Right ventricle myocardium inferior (tissue), 1 donor: ENCODE measurements at regions of chr6 and their contacts with region 1.

Region 1: GRCh38 chr6:32589598-32590449 is at the start of gene HLA-DRB1:
- DNase-seq: no peak
- ATAC-seq: peak; percentile 90
- total RNA-seq, gene HLA-DRB1: 32.4 TPM

Region 2: DNA sequence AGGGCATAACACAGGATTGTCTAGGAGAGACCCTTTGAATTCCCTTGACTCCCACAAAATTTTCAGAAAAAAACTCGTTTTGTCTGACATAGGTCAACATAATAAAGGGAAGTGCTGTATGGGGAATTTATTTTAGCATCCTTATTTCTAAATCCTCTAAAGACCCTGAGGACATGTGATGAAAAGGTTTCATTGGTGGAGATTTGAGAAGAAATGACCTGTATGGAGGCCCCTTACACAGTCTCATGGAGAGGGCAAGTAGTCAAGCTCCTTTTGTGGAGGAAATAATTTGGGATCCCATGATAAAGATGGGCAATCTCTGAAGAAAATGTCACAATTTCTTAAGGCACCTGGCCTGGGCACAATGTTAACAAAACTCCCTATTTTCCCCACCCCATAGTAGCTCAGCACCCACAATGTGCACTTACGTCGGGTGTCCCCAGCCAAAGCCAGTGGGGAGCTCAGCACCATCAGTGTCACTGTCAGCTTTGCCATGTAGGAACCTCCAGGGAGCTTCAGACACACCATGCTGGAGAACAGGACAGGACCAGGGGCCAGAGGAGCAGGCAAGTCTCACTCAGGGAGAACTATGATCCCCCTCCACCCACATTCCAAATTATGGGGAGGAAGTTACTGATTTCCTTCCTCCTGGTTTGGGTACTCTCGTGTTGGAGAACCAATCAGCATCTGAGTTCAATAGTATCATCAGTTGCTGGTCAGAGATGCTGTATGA is 60.0 kb before region 1 on chr6 and contains the start of gene HLA-DRB5:
- intact Hi-C with region 1: loop called (anchors 10 kb)
- DNase-seq: peak; percentile 61
- ATAC-seq: peak; percentile 86
- total RNA-seq, gene HLA-DRB5: 21.2 TPM

Region 3: GRCh38 chr6:32622545-32623401 is 32.9 kb after region 1 on chr6:
- intact Hi-C with region 1: no loop called
- DNase-seq: no peak
- ATAC-seq: peak; percentile 52

Region 4: DNA sequence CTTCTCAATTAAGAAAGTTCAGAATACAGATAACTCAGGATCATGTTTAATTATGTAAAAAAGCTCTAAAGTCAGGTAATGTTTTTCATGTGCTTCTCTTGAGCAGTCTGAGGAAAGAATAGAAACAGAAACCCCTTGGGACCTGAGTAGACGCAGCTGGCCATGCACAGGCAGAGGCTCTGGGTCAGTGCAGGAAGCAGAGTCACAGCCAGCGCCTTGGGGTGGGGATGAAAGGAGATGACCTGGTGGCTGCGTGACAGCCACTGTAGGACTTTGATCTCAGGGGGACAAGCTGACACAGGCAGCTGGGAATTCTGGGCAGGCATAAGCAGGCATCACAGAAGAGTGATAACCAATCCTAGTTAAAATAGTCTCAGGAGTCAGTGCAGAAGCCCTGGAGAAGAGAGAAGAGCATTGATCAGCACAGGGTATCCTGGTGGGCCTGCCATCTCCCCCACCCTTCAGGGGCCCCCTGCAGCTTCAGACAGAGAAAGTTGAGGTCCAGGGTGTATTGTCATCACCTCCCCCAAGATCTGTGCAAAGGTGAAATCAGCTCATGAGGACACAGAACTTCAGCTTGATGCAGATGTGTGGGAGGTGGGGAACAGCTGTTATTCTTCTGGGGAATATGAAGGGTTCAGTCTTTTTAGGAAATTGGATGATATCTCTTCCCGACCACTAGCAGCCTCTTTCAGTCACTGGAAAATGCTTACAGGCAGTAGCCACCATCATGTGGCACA is 70.2 kb after region 1 on chr6:
- intact Hi-C with region 1: no loop called
- DNase-seq: no peak
- ATAC-seq: no peak

Region 5: GRCh38 chr6:32692019-32692418 is 102.2 kb after region 1 on chr6:
- intact Hi-C with region 1: no loop called
- DNase-seq: no peak
- ATAC-seq: no peak